ENCODE measurements at regions of chr3 and their contacts with region 1.

Region 1: DNA sequence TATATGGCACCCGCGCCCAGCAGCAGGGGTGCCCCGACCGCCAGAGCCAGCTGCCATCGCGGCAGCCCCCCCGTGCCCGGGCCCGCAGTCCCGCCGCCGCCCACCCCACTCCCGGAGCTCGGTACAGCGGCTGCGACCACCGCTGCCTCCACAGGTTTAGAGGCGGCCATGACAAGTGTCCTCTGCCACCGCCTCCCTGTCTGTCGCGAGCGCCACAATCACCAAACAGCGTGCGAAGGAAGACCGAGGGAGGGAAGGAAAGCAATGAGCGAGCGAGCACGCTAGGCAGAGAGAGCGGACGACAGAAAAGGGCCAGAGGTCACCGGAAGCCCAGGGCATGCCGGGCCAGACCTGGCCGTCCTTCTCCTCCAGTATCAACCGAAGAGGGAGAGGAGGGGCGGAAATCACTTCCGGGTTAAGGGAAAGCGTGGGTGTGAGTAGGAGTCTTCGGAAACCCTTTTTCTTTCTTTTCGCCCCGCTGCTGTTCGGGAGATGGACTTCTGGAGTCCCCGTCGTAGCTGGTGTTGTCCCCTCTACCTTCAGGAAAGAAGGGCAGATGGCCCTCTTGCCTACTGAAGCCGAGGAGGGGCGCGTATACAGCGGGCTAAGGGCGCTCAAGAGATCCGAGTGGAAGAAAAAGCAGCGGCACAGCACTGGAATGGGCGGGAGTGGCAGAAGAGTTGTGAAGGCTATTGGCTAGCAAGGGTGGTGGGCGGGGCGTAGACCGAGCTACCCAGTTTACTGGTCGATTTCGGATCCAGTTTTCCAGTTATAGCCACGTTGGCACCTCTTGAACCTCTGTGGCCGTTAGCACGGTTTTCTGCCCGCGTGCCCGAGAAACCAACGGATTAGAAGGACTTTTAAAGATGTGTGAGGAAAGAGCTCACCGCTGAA is at the starts of genes LNP1 and TOMM70:
- DNase-seq: peak; percentile 85 to 97 (median 94)
- ATAC-seq: peak; percentile 85
- H3K4me3 ChIP-seq: peak within 1 kb of the TSS; percentile 76 to 92
- H3K4me3 Mint-ChIP-seq: peak within 1 kb of the TSS; percentile 98
- H3K27ac ChIP-seq: peak within 1 kb of the TSS; percentile 77 to 92
- H3K27ac Mint-ChIP-seq: peak within 1 kb of the TSS; percentile 99
- H3K4me1 ChIP-seq: peaks cover 46% of the 10 kb centered on the region
- H3K4me1 Mint-ChIP-seq: peaks cover 73% of the 10 kb centered on the region
- H3K27me3 ChIP-seq: no peaks in the 10 kb centered on the region
- H3K27me3 Mint-ChIP-seq: no peaks in the 10 kb centered on the region
- CTCF ChIP-seq: no peak
- total RNA-seq, gene LNP1: 1.1 to 1.2 TPM
- total RNA-seq, gene TOMM70: 27.7 to 30.5 TPM

Region 2: GRCh38 chr3:98901392-98902350 is 1499.4 kb before region 1 on chr3 and contains the start of gene DCBLD2:
- CTCF ChIA-PET with region 1: no interaction called
- POLR2A ChIA-PET with region 1: interaction called, 4 read pairs
- intact Hi-C with region 1: loop called in 1 of 2 experiments (anchors 2 kb)
- DNase-seq: peak; percentile 75 to 96 (median 87)
- ATAC-seq: peak; percentile 97
- H3K4me3 ChIP-seq: peak within 1 kb of the TSS; percentile 62 to 91
- H3K4me3 Mint-ChIP-seq: peak within 1 kb of the TSS; percentile 94
- H3K27ac ChIP-seq: peak within 1 kb of the TSS; percentile 37 to 46
- H3K27ac Mint-ChIP-seq: peak within 1 kb of the TSS; percentile 73
- H3K4me1 ChIP-seq: peaks cover 15% of the 10 kb centered on the region
- H3K4me1 Mint-ChIP-seq: peaks cover 24% of the 10 kb centered on the region
- H3K27me3 ChIP-seq: no peaks in the 10 kb centered on the region
- H3K27me3 Mint-ChIP-seq: peaks cover 11% of the 10 kb centered on the region
- CTCF ChIP-seq: no peak
- total RNA-seq, gene DCBLD2: 1.6 to 1.8 TPM

Region 3: DNA sequence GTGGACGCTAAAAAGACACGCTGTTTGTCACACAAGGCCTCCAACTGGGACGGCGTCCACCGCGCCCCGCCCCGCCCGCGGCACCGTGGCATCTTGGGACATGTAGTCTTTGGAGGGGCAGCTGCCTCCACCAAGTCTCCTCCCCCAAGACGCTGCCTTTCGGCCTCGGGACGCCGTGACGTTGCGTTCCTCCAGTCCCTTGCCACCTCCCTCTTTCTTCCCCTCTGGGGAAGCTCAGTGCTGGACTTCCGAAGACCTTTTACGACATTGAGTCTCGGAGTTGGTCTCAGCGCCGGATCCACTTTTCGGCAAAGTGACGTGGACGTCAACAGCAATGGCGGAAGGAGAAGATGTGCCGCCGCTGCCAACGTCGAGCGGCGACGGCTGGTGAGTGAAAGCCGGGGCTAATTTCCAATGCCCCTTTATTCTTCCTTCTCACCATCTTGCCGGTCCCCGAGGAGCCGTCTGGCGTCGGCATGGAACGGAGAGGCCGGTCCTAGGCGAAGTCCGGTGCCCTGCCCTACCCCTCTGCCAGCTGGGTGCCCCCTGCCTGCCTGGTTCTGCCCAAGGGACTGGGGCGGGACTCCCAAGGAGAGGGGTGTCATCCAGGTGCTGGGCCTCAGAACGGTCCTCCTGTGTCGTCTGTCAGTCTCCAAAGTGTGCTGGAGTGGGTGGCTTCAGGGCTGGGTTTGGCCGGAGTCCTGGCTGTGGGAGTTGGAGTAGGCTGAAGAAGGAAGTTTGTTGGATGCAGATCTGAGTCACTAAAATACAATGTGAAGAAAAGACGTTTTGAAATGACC is 140.1 kb before region 1 on chr3 and contains the start of gene TBC1D23:
- CTCF ChIA-PET with region 1: interaction called, 3 read pairs
- POLR2A ChIA-PET with region 1: interaction called, 11 read pairs
- intact Hi-C with region 1: loop called (anchors 1 kb)
- DNase-seq: peak; percentile 91 to 99 (median 97)
- ATAC-seq: peak; percentile 98
- H3K4me3 ChIP-seq: peak within 1 kb of the TSS; percentile 80 to 90
- H3K4me3 Mint-ChIP-seq: peak within 1 kb of the TSS; percentile 95
- H3K27ac ChIP-seq: peak within 1 kb of the TSS; percentile 91 to 94
- H3K27ac Mint-ChIP-seq: peak within 1 kb of the TSS; percentile 98
- H3K4me1 ChIP-seq: peaks cover 17% of the 10 kb centered on the region
- H3K4me1 Mint-ChIP-seq: peaks cover 60% of the 10 kb centered on the region
- H3K27me3 ChIP-seq: no peaks in the 10 kb centered on the region
- H3K27me3 Mint-ChIP-seq: no peaks in the 10 kb centered on the region
- CTCF ChIP-seq: no peak
- total RNA-seq, gene TBC1D23: 38.9 to 43.9 TPM

Region 4: DNA sequence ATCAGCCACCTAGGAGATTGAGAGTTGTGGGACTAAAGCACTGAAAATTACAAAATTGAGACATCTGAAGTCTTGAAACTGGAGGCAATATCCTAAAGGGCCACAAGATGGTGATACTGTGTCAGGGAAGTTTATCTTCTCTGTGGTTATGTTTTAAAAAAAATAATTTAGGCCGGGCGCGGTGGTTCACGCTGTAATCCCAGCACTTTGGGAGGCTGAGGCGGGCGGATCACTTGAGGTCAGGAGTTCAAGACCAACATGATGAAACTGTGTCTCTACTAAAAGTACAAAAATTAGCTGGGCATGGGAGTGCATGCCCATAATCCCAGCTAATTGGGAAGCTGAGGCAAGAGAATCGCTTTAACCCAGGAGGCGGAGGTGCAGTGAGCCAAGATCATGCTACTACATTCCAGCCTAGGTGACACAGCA is 84.4 kb before region 1 on chr3:
- CTCF ChIA-PET with region 1: no interaction called
- POLR2A ChIA-PET with region 1: interaction called, 3 read pairs
- intact Hi-C with region 1: loop called in 1 of 2 experiments (anchors 5 kb)
- DNase-seq: peak in 6 of 9 experiments; percentile 13 to 76 (median 30)
- ATAC-seq: peak; percentile 84
- H3K4me3 ChIP-seq: no peak overlapping the region
- H3K4me3 Mint-ChIP-seq: peak overlapping the region; percentile 45
- H3K27ac ChIP-seq: no peak overlapping the region
- H3K27ac Mint-ChIP-seq: no peak overlapping the region
- H3K4me1 ChIP-seq: no peaks in the 10 kb centered on the region
- H3K4me1 Mint-ChIP-seq: peaks cover 6% of the 10 kb centered on the region
- H3K27me3 ChIP-seq: no peaks in the 10 kb centered on the region
- H3K27me3 Mint-ChIP-seq: no peaks in the 10 kb centered on the region
- CTCF ChIP-seq: peak; percentile 58

Region 5: DNA sequence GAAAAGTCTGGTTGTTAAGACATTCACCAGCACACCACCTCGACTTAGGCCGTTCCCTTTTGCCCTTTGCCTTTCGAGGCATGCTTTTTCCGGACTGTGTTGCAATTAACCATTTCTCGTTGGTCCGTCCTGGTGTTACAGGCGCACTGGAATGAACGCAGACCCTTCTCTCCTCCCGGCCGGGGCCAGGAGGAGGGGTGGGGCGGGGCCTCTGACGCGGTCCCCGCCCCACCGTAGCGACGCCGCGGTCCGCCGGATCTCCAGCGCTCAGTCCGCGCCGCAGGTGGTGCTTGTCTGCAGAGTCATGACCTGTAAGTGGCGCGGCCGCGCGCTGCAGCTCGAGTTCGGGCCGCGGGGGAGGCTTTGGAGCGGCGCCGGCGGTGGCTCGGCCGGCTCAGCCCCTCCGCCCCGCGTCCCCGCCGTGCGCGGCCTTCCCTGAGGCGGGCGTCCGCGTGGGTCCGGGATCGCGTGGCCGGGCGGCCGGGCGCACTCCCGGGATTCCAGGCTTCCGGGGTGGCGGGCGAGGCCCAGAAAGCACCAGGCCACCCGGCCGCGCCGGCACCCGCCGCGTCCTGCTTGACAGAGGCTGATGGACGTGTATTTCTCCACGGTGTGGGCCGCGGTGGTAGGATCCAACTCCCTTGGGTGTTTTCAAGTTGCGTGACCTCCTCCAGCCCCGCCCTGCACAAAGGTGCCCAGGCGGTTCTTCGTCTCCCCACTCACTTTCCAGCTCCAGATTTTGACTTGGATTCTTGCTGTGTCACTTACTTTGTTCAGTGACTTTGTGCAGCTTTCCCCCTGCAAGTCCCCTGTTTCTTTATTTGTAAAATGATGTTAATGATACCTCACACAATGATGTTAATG is 66.3 kb before region 1 on chr3 and contains the start of gene NIT2:
- CTCF ChIA-PET with region 1: interaction called, 3 read pairs
- POLR2A ChIA-PET with region 1: interaction called, 11 read pairs
- intact Hi-C with region 1: loop called (anchors 1 to 2 kb)
- DNase-seq: peak; percentile 54 to 89 (median 78)
- ATAC-seq: peak; percentile 95
- H3K4me3 ChIP-seq: peak within 1 kb of the TSS; percentile 70 to 72
- H3K4me3 Mint-ChIP-seq: peak within 1 kb of the TSS; percentile 99
- H3K27ac ChIP-seq: peak within 1 kb of the TSS; percentile 51 to 71
- H3K27ac Mint-ChIP-seq: peak within 1 kb of the TSS; percentile 93
- H3K4me1 ChIP-seq: peaks cover 9% of the 10 kb centered on the region
- H3K4me1 Mint-ChIP-seq: peaks cover 28% of the 10 kb centered on the region
- H3K27me3 ChIP-seq: no peaks in the 10 kb centered on the region
- H3K27me3 Mint-ChIP-seq: no peaks in the 10 kb centered on the region
- CTCF ChIP-seq: no peak
- total RNA-seq, gene NIT2: 17.2 to 17.7 TPM

Region 6: GRCh38 chr3:100352296-100353231 is 48.5 kb before region 1 on chr3:
- CTCF ChIA-PET with region 1: no interaction called
- POLR2A ChIA-PET with region 1: no interaction called
- intact Hi-C with region 1: no loop called
- DNase-seq: no peak
- ATAC-seq: no peak
- H3K4me3 ChIP-seq: no peak overlapping the region
- H3K4me3 Mint-ChIP-seq: no peak overlapping the region
- H3K27ac ChIP-seq: no peak overlapping the region
- H3K27ac Mint-ChIP-seq: peak overlapping the region; percentile 55
- H3K4me1 ChIP-seq: no peaks in the 10 kb centered on the region
- H3K4me1 Mint-ChIP-seq: no peaks in the 10 kb centered on the region
- H3K27me3 ChIP-seq: no peaks in the 10 kb centered on the region
- H3K27me3 Mint-ChIP-seq: no peaks in the 10 kb centered on the region
- CTCF ChIP-seq: no peak

Region 7: GRCh38 chr3:100449214-100449613 is 48.2 kb after region 1 on chr3:
- CTCF ChIA-PET with region 1: no interaction called
- POLR2A ChIA-PET with region 1: no interaction called
- intact Hi-C with region 1: no loop called
- DNase-seq: no peak
- ATAC-seq: no peak
- H3K4me3 ChIP-seq: no peak overlapping the region
- H3K4me3 Mint-ChIP-seq: no peak overlapping the region
- H3K27ac ChIP-seq: no peak overlapping the region
- H3K27ac Mint-ChIP-seq: no peak overlapping the region
- H3K4me1 ChIP-seq: no peaks in the 10 kb centered on the region
- H3K4me1 Mint-ChIP-seq: no peaks in the 10 kb centered on the region
- H3K27me3 ChIP-seq: no peaks in the 10 kb centered on the region
- H3K27me3 Mint-ChIP-seq: no peaks in the 10 kb centered on the region
- CTCF ChIP-seq: no peak

Region 8: GRCh38 chr3:101381809-101382208 is 980.8 kb after region 1 on chr3:
- CTCF ChIA-PET with region 1: no interaction called
- POLR2A ChIA-PET with region 1: no interaction called
- intact Hi-C with region 1: loop called in 1 of 2 experiments (anchors 10 kb)
- DNase-seq: peak in 2 of 9 experiments; percentile 46 to 61
- ATAC-seq: peak; percentile 44
- H3K4me3 ChIP-seq: no peak overlapping the region
- H3K4me3 Mint-ChIP-seq: no peak overlapping the region
- H3K27ac ChIP-seq: peak overlapping the region in 1 of 2 experiments; percentile 25
- H3K27ac Mint-ChIP-seq: peak overlapping the region; percentile 49
- H3K4me1 ChIP-seq: peaks cover 12% of the 10 kb centered on the region
- H3K4me1 Mint-ChIP-seq: peaks cover 57% of the 10 kb centered on the region
- H3K27me3 ChIP-seq: no peaks in the 10 kb centered on the region
- H3K27me3 Mint-ChIP-seq: no peaks in the 10 kb centered on the region
- CTCF ChIP-seq: peak; percentile 55

Measured in CD8-positive, alpha-beta T cell (primary cell).